PC-9 (cell line): ENCODE measurements at regions of chr12 and their contacts with region 1.

Region 1: GRCh38 chr12:94644141-94644979 is 6.0 kb downstream of the TMCC3 start:
- DNase-seq: peak; percentile 57 to 94
- H3K4me3 ChIP-seq: peak overlapping the region; percentile 45; the same call in 1 of the 2 replicates
- H3K27ac ChIP-seq: peak overlapping the region; percentile 94
- H3K4me1 ChIP-seq: peaks cover 67% of the 10 kb centered on the region
- H3K27me3 ChIP-seq: no peaks in the 10 kb centered on the region
- CTCF ChIP-seq: no peak

Region 2: GRCh38 chr12:94498073-94498472 is 146.3 kb before region 1 on chr12:
- CTCF ChIA-PET with region 1: no interaction called
- POLR2A ChIA-PET with region 1: no interaction called
- intact Hi-C with region 1: no loop called
- DNase-seq: no peak
- H3K4me3 ChIP-seq: no peak overlapping the region
- H3K27ac ChIP-seq: no peak overlapping the region
- H3K4me1 ChIP-seq: no peaks in the 10 kb centered on the region
- H3K27me3 ChIP-seq: no peaks in the 10 kb centered on the region
- CTCF ChIP-seq: no peak

Region 3: DNA sequence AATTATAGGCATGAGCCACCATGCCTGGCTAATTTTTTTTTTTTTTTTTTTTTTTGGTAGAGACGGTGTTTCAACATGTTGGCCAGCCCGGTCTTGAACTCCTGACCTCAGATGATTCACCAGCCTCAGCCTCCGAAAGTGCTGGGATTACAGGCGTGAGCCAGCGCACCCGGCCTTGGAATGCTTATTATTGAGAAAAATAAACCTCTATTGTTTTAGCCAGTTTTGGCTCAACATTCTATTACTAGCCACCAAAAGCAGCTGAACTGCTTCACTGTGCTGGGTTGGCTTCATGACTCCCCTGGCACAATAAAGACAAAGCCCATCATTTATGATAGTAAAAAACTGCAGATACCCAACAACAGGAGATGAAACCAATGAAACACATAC is 91.2 kb before region 1 on chr12:
- CTCF ChIA-PET with region 1: no interaction called
- POLR2A ChIA-PET with region 1: no interaction called
- intact Hi-C with region 1: loop called (anchors 1 kb)
- DNase-seq: peak; percentile 81 to 87
- H3K4me3 ChIP-seq: no peak overlapping the region; the same call in 1 of the 2 replicates
- H3K27ac ChIP-seq: peak overlapping the region; percentile 92
- H3K4me1 ChIP-seq: peaks cover 51% of the 10 kb centered on the region
- H3K27me3 ChIP-seq: no peaks in the 10 kb centered on the region
- CTCF ChIP-seq: no peak